ENCODE measurements at regions of chr11 and their contacts with region 1.

Region 1: GRCh38 chr11:62905927-62906531 is 15.1 kb downstream of the CHRM1 start:
- DNase-seq: peak; percentile 86
- ATAC-seq: peak; percentile 74
- H3K4me3 Mint-ChIP-seq: no peak overlapping the region
- H3K27ac Mint-ChIP-seq: no peak overlapping the region
- H3K4me1 Mint-ChIP-seq: peaks cover 28% of the 10 kb centered on the region
- H3K27me3 Mint-ChIP-seq: peaks cover 32% of the 10 kb centered on the region

Region 2: DNA sequence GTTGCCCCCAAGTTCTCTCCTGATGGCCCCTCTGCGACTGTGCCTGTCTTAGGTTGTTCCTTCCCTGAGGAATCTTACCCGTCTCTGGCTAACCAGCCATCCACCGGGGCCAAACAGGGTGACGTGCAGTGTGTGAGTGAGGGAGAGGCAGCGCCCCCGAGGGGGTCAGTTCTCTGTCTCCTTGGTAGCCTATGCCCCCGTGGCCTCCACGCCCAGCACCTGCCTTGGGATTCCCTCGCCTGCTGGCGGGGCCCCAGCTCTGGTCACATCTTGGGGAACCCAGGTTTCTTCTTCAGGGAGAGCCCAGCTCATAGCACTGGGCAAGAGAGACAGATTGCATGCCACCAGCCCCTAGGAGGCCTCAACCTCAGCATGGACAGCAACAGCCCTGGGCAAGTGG is 106.5 kb before region 1 on chr11:
- CTCF ChIA-PET with region 1: no interaction called
- DNase-seq: no peak
- ATAC-seq: peak; percentile 4
- H3K4me3 Mint-ChIP-seq: no peak overlapping the region
- H3K27ac Mint-ChIP-seq: no peak overlapping the region
- H3K4me1 Mint-ChIP-seq: peaks cover 29% of the 10 kb centered on the region
- H3K27me3 Mint-ChIP-seq: no peaks in the 10 kb centered on the region

Region 3: DNA sequence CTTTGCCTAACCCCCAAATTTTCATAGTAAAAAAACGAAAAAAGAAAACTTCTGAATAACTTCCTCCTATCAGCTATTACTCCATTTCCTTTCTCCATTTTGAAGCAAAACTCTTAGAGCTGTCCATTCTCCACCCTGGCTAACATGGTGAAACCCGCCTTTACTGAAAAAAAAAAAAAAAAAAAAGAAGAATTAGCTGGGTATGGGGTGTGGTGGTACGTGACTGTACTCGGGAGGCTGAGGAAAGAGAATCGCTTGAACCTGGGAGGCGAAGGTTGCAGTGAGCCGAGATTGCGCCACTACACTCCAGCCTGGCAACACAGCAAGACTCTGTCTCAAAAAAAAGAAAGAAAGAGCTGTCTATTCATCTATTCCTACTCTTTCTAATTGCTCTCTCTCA is 89.5 kb before region 1 on chr11:
- CTCF ChIA-PET with region 1: no interaction called
- DNase-seq: no peak
- ATAC-seq: no peak
- H3K4me3 Mint-ChIP-seq: no peak overlapping the region
- H3K27ac Mint-ChIP-seq: no peak overlapping the region
- H3K4me1 Mint-ChIP-seq: peaks cover 2% of the 10 kb centered on the region
- H3K27me3 Mint-ChIP-seq: no peaks in the 10 kb centered on the region

Region 4: GRCh38 chr11:62880803-62881578 is 25.0 kb before region 1 on chr11 and contains the start of gene SLC3A2:
- CTCF ChIA-PET with region 1: interaction called, 29 read pairs
- DNase-seq: peak; percentile 94
- ATAC-seq: peak; percentile 85
- H3K4me3 Mint-ChIP-seq: peak within 1 kb of the TSS; percentile 96
- H3K27ac Mint-ChIP-seq: peak within 1 kb of the TSS; percentile 100
- H3K4me1 Mint-ChIP-seq: peaks cover 45% of the 10 kb centered on the region
- H3K27me3 Mint-ChIP-seq: no peaks in the 10 kb centered on the region
- total RNA-seq, gene SLC3A2: 213 to 259 TPM

Region 5: DNA sequence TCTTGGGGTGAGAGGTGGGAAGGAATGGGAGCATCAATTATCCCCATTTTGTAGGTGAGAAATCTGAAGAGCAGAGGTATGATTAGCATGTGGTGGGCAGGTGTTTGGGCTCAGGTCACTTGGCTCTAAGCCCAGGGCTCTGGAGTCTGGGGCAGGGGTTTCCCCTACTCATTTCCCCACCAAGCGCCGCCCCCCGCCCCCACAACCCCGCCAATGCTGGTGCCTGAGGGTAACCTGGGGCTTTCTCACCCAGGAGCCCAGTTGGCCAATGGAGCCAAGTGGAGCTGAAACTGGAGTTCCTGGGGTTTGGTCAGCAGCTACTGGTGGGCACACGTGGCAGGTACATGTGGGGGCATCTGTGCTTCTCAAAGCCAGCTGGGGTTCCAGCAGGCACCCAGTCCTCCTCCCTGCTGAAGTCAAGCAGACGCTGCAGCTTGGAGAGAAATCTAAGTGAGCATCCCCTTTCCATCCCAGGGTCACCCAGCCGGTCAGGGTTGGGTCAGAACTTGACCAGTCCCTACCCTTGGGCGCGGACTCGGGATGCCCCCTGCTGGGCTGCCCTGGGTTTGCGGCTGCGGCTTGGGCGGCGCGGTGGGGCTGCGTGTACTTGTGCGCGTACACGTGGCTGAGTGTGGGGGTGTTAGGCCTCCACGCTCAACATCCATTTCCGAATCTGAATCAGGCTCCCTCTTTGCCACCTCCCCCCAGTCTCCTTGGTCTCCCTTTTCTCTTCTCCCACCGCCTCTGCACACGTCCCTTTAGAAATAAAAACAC is 16.8 kb after region 1 on chr11:
- CTCF ChIA-PET with region 1: interaction called, 58 read pairs
- DNase-seq: peak; percentile 50
- ATAC-seq: no peak
- H3K4me3 Mint-ChIP-seq: no peak overlapping the region
- H3K27ac Mint-ChIP-seq: no peak overlapping the region
- H3K4me1 Mint-ChIP-seq: peaks cover 19% of the 10 kb centered on the region
- H3K27me3 Mint-ChIP-seq: peaks cover 74% of the 10 kb centered on the region

Region 6: DNA sequence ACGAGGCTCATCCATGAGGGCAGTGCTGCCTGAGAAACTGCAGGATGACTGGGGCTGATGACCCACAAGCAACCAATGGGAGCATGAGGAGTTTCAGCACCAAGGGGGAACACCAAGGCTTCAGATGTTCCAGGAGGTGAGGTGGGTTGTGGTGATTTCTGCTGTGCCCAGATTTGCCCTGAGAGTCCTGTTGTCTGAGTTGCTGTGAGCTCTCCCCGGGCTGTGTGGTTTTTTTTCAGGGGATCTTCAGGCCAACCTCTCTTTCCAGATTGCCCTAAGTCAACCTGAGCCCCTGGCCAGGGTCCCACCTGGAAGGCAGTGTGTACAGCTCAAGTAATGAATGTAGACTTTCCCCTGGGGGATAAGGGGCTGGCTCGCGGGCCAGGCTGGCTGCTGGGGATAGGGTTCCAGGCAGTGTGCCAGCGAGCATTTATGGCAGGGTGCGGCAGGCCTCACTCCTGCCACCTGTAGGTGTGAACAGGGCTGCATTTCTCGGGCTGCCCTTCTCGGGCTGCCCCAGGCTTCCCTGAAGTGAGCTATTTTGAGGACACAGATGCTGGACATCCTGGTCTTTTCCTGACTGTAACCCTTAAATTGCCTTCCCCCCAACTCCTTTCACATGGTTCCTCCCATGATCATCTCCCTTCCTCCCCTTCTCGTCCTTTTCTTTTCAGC is 69.0 kb after region 1 on chr11:
- CTCF ChIA-PET with region 1: interaction called, 13 read pairs
- DNase-seq: no peak
- ATAC-seq: peak; percentile 51
- H3K4me3 Mint-ChIP-seq: no peak overlapping the region
- H3K27ac Mint-ChIP-seq: no peak overlapping the region
- H3K4me1 Mint-ChIP-seq: no peaks in the 10 kb centered on the region
- H3K27me3 Mint-ChIP-seq: peaks cover 13% of the 10 kb centered on the region

Region 7: GRCh38 chr11:63023841-63024648 is 118.0 kb after region 1 on chr11:
- CTCF ChIA-PET with region 1: interaction called, 284 read pairs
- DNase-seq: peak; percentile 85
- ATAC-seq: peak; percentile 70
- H3K4me3 Mint-ChIP-seq: no peak overlapping the region
- H3K27ac Mint-ChIP-seq: no peak overlapping the region
- H3K4me1 Mint-ChIP-seq: peaks cover 2% of the 10 kb centered on the region
- H3K27me3 Mint-ChIP-seq: peaks cover 23% of the 10 kb centered on the region

Region 8: GRCh38 chr11:63032457-63032856 is 126.4 kb after region 1 on chr11:
- CTCF ChIA-PET with region 1: interaction called, 45 read pairs
- DNase-seq: no peak
- ATAC-seq: no peak
- H3K4me3 Mint-ChIP-seq: no peak overlapping the region
- H3K27ac Mint-ChIP-seq: no peak overlapping the region
- H3K4me1 Mint-ChIP-seq: peaks cover 2% of the 10 kb centered on the region
- H3K27me3 Mint-ChIP-seq: peaks cover 39% of the 10 kb centered on the region

Measured in activated CD8-positive, alpha-beta memory T cell treated with anti-CD3 and anti-CD28 coated beads, Interleukin-2, amount 10 ng/mL, durations not matched to agents 7 days and 5 days (primary cell).